Common myeloid progenitor, CD34-positive (primary cell): ENCODE measurements at regions of chr14 and their contacts with region 1.

Region 1: DNA sequence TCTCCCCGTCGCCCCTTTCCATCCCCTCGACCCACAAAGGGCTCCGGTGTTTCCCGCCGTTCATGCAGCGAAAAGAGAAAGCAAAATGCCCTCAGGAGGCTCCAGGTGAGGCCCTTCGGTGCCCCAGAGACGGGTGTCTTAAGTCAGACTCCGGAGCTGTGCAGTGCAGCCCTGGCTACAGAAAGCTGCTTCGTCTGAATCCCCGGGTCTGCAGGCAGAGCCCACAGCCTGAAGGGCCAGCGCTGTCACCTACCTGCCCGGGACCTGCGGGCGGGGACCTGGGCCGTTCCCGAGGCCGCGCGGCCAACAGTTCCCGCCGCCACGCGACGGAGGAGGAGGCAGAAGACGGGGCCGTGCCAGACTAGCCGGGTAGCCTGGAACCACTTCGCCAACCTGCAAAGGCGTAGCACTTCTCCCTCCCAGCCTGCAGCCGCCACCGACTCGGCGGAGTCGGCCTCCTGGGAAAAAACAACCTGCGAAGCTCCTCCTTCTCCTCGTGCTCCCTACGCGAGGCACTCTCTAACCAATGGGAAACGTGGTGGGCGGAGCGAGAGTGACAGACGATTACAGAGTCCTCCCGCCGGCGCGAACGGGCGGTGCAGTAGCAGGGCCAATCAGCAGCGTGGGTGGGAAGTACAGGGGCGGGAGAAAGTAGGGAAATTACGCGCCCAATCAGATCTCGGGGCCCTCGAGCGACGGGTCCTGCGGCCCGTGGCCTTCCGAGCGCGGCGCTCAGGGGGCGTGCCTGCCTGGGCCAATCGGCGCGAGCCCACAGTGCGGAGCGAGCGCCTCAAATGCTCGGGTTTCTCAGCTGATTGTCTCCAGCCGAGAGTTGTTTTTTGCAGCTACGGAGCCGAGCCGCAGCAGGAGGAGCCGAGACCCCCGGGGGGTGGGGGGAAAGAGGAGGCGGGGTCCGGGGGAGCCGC is at the starts of genes GPR137C and TXNDC16:
- DNase-seq: peak; percentile 100
- H3K4me3 ChIP-seq: peak within 1 kb of the TSS; percentile 80 to 96 (median 91)
- H3K27ac ChIP-seq: peak within 1 kb of the TSS; percentile 47 to 84
- H3K4me1 ChIP-seq: peaks cover 19 to 38% (median 27%) of the 10 kb centered on the region in 4 experiments
- H3K27me3 ChIP-seq: peaks cover 0 to 3% (median 0%) of the 10 kb centered on the region in 5 experiments

Region 2: GRCh38 chr14:52563120-52563519 is 10.8 kb after region 1 on chr14:
- CTCF ChIA-PET with region 1: interaction called, 12 read pairs
- POLR2A ChIA-PET with region 1: no interaction called
- DNase-seq: no peak
- H3K4me3 ChIP-seq: no peak overlapping the region
- H3K27ac ChIP-seq: no peak overlapping the region
- H3K4me1 ChIP-seq: no peaks in the 10 kb centered on the region
- H3K27me3 ChIP-seq: no peaks in the 10 kb centered on the region